ENCODE measurements at regions of chr2 and their contacts with region 1.

Region 1: DNA sequence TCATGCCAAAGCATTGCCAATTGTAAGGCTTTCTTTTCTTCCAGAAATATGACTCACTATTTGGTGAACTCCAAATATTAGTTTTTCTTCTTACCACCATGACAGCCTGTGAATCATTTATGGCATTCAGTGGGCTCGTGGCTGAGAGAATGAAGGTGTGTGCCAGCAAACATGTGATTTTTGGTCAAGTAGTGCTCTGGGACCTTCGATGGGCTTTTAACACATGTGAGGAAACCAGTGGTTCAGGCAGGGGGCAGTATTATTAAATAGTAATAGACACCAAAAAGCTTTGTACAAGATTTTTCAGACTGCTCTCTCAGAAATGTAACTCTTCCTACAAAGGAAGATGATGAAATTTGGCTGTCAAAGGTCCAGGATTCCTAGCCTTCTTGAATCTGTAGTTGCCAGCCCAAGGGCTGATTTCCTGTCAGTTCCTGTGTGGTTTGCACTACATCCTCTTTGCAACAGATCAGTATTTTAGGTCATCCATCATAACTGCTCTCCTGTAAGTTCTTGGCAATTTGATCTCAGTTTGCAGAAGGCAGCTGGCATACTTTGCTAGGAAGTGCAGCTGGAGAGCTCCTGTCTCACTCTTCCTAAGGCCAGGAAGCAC is 64.3 kb downstream of the BABAM2 start:
- DNase-seq: peak; percentile 83

Region 2: GRCh38 chr2:27992787-27993401 is 38.0 kb after region 1 on chr2:
- intact Hi-C with region 1: loop called in 1 of 2 experiments (anchors 5 kb)
- DNase-seq: no peak

Region 3: DNA sequence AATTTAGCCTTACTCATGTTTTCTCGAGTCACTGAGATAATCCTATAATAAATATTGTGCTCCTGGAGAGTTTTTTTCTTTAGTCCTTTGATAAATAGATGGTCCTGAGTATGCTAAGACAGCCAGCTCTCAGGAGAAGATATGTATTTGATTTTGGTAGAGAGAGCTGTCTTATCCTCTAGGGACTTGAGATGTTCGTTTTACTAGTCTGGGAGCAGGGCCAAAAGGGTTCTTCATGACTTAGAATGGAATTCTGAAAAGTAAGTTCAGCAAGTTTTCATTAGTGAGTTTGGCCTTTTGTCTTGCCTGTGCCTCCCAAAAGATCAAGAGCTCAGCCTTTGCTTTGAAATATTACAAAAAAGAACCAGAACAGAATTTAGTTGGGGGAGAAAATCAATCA is 182.3 kb after region 1 on chr2:
- intact Hi-C with region 1: no loop called
- DNase-seq: no peak

Region 4: DNA sequence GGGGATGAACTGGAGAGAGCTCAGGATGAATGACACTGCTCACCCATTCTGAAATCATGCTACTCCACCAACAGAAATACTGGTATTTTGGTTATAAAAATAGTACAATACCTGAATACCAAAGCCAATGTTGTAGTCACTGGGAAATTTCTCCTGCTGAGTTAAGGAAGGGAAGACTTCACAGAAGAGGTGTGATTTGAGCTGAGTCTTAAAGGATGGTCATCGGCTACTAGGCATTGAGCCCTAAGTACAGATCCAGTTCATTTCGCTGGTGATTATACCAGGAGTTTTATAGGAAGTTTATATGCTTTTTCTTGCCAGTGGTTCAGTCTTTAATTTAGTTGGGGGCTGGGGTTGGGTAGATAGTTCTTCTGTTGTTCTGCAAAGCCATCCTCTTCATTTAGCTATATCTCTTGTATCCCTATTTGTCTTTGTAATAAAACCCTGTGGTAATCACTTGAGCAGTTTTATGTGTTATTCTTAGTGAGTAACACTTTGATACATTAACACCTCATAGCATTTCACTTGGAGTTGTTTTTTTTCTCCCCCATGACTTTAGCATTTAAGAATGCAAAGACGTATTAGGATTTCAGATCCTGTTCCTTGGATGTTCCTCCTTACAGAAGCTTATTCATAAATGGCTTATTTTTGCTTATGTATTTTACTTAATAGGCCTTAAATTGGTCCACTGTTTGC is 197.9 kb after region 1 on chr2:
- intact Hi-C with region 1: loop called in 1 of 2 experiments (anchors 1 kb)
- DNase-seq: no peak